MCF 10A (cell line): ENCODE measurements at regions of chr1 and their contacts with region 1.

Region 1: DNA sequence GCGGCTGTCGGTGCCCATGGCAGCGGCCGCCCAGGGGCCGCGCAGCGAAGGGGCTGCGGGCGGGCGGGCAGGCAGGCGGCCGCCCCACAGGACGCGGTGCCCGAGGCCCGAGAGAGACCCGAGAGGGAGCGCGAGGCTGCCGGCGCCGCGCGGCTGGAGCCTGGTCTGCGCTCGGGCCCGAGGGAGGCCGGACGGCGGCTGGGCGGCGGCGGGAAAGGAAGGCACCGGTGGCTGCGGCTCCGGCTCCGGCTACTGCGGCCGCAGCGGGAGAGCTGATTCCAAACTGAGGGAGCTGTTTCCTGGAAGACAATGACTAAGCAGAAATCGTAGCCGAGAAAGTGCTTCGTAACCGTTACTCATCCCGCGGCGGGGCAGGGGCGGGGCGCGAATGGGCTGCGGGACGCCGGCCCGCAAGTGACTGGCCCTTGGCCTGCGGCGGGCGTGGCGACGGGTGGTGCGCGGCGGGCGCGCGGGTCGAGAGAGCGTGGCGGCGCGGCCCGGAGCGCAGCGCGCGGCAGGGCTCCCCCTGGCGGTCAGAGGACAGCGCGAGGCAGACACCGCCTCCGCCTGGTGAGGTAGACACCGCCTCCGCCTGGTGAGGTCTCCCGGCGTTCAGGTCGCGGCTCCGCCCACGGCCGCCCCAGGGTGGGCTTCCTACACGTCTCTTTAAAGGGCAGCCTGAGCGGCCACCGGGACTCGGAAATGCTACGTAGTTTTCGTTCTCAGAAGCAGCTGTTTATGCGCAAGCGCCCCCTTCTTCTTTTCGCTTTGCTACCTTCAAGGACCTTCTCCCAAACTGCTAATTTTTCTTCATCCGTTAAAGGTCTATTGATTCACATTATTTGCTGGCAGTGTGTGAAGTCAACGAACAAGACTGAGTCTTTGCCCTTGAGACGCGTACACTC is at the start of gene GCLM:
- DNase-seq: peak; percentile 95
- H3K4me3 Mint-ChIP-seq: peak within 1 kb of the TSS; percentile 81
- H3K27ac Mint-ChIP-seq: peak within 1 kb of the TSS; percentile 17
- H3K4me1 Mint-ChIP-seq: peaks cover 16% of the 10 kb centered on the region
- H3K27me3 Mint-ChIP-seq: peaks cover 23% of the 10 kb centered on the region
- CTCF ChIP-seq: peak; percentile 89
- total RNA-seq, gene GCLM: 21.1 and 21.3 TPM in 2 replicates

Region 2: DNA sequence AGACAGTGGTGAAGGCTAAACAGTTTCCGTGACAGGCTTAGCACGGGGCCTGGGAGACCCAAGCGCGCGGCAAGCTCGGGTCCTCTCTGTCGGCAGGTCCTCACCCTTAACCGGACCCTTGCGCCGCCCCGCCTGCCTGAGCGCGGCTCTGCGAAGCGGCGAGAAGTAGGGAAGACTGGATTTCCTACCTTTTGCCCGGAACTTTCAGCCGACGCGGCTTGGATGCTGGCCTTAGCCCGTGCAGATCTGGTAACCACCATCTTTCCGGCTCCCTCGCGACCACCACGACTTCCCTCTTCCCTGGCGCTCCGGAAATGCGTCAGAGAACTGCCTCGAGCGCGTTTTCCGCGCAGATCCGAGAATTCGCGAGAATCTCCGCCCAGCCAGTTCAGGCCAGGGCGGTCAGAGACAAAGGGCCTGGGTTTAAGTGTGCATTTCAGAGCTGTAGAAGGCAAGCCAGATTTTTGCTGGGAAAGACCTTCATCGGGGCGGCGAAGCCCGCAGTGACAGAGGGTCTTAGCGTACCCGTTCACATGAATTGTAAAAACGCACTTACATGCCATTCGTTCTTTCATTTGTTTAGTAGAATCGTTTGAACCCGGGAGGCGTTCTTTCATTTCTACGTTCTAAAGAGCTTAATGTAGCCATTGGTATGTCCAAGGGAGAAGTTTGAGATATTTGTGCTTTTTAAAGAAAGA is 30.4 kb before region 1 on chr1 and contains the start of gene DNTTIP2:
- CTCF ChIA-PET with region 1: interaction called, 3 read pairs
- POLR2A ChIA-PET with region 1: interaction called, 30 read pairs
- intact Hi-C with region 1: no loop called
- DNase-seq: peak; percentile 91
- H3K4me3 Mint-ChIP-seq: peak within 1 kb of the TSS; percentile 96
- H3K27ac Mint-ChIP-seq: peak within 1 kb of the TSS; percentile 99
- H3K4me1 Mint-ChIP-seq: peaks cover 27% of the 10 kb centered on the region
- H3K27me3 Mint-ChIP-seq: no peaks in the 10 kb centered on the region
- CTCF ChIP-seq: no peak
- total RNA-seq, gene DNTTIP2: 78.1 and 96.5 TPM in 2 replicates

Region 3: GRCh38 chr1:93919780-93920179 is 10.4 kb after region 1 on chr1:
- CTCF ChIA-PET with region 1: interaction called, 20 read pairs
- POLR2A ChIA-PET with region 1: no interaction called
- intact Hi-C with region 1: no loop called
- DNase-seq: no peak
- H3K4me3 Mint-ChIP-seq: no peak overlapping the region
- H3K27ac Mint-ChIP-seq: no peak overlapping the region
- H3K4me1 Mint-ChIP-seq: no peaks in the 10 kb centered on the region
- H3K27me3 Mint-ChIP-seq: peaks cover under 1% of the 10 kb centered on the region
- CTCF ChIP-seq: no peak